Activated B cell treated with CpG ODN at 0.5 μM for 24 hours (primary cell): ENCODE measurements at regions of chr22 and their contacts with region 1.

Region 1: GRCh38 chr22:31661851-31662656 is at the start of gene PISD:
- DNase-seq: peak; percentile 96
- ATAC-seq: peak; percentile 96
- H3K4me3 Mint-ChIP-seq: peak within 1 kb of the TSS; percentile 96
- H3K27ac Mint-ChIP-seq: peak within 1 kb of the TSS; percentile 91
- H3K4me1 Mint-ChIP-seq: peaks cover 32% of the 10 kb centered on the region
- H3K27me3 Mint-ChIP-seq: no peaks in the 10 kb centered on the region
- CTCF ChIP-seq: no peak
- total RNA-seq, gene PISD: 53.7 and 61.6 TPM in 2 replicates

Region 2: DNA sequence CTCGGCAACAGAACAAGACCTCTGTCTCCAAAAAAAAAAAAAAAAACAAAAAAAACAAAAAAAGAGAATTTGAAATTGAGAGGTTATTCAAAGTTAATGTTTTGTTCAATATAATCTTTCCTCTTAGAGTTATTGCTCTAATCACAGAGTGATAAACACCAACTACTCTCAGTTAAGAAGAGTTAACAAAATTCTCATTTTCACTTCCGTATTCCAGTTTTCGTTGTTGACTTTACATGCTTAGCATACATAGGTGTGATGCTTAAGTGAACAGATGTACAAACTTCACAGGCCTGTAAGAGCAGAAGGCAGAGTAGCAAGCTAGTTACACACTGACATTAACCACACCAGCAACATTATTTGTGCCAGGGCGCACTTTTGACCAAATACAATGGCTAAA is 184.7 kb before region 1 on chr22:
- CTCF ChIA-PET with region 1: no interaction called
- POLR2A ChIA-PET with region 1: interaction called, 15 read pairs
- intact Hi-C with region 1: no loop called
- DNase-seq: no peak
- ATAC-seq: peak; percentile 95
- H3K4me3 Mint-ChIP-seq: no peak overlapping the region
- H3K27ac Mint-ChIP-seq: peak overlapping the region; percentile 82
- H3K4me1 Mint-ChIP-seq: peaks cover 24% of the 10 kb centered on the region
- H3K27me3 Mint-ChIP-seq: no peaks in the 10 kb centered on the region
- CTCF ChIP-seq: no peak

Region 3: GRCh38 chr22:31588970-31589675 is 72.9 kb before region 1 on chr22:
- CTCF ChIA-PET with region 1: no interaction called
- POLR2A ChIA-PET with region 1: no interaction called
- intact Hi-C with region 1: no loop called
- DNase-seq: no peak
- ATAC-seq: no peak
- H3K4me3 Mint-ChIP-seq: no peak overlapping the region
- H3K27ac Mint-ChIP-seq: no peak overlapping the region
- H3K4me1 Mint-ChIP-seq: no peaks in the 10 kb centered on the region
- H3K27me3 Mint-ChIP-seq: no peaks in the 10 kb centered on the region
- CTCF ChIP-seq: no peak

Region 4: GRCh38 chr22:31646186-31647089 is 15.6 kb before region 1 on chr22:
- CTCF ChIA-PET with region 1: interaction called, 7 read pairs
- POLR2A ChIA-PET with region 1: interaction called, 11 read pairs
- intact Hi-C with region 1: no loop called
- DNase-seq: no peak
- ATAC-seq: peak; percentile 80
- H3K4me3 Mint-ChIP-seq: peak overlapping the region; percentile 32
- H3K27ac Mint-ChIP-seq: peak overlapping the region; percentile 80
- H3K4me1 Mint-ChIP-seq: peaks cover 41% of the 10 kb centered on the region
- H3K27me3 Mint-ChIP-seq: no peaks in the 10 kb centered on the region
- CTCF ChIP-seq: no peak

Region 5: GRCh38 chr22:31970490-31971444 is 308.7 kb after region 1 on chr22:
- CTCF ChIA-PET with region 1: interaction called, 5 read pairs
- POLR2A ChIA-PET with region 1: interaction called, 4 read pairs
- intact Hi-C with region 1: loop called (anchors 1 kb)
- DNase-seq: peak; percentile 86
- ATAC-seq: peak; percentile 95
- H3K4me3 Mint-ChIP-seq: peak overlapping the region; percentile 76
- H3K27ac Mint-ChIP-seq: peak overlapping the region; percentile 65
- H3K4me1 Mint-ChIP-seq: peaks cover 18% of the 10 kb centered on the region
- H3K27me3 Mint-ChIP-seq: no peaks in the 10 kb centered on the region
- CTCF ChIP-seq: peak; percentile 30

Region 6: GRCh38 chr22:32474635-32475467 is 812.8 kb after region 1 on chr22 and contains the start of gene FBXO7:
- CTCF ChIA-PET with region 1: no interaction called
- POLR2A ChIA-PET with region 1: no interaction called
- intact Hi-C with region 1: loop called (anchors 10 kb)
- DNase-seq: peak; percentile 92
- ATAC-seq: peak; percentile 84
- H3K4me3 Mint-ChIP-seq: peak within 1 kb of the TSS; percentile 95
- H3K27ac Mint-ChIP-seq: peak within 1 kb of the TSS; percentile 91
- H3K4me1 Mint-ChIP-seq: peaks cover 30% of the 10 kb centered on the region
- H3K27me3 Mint-ChIP-seq: no peaks in the 10 kb centered on the region
- CTCF ChIP-seq: no peak
- total RNA-seq, gene FBXO7: 85.4 and 97.2 TPM in 2 replicates